ENCODE measurements at regions of chr17 and their contacts with region 1.

Region 1: GRCh38 chr17:39653662-39654331 is 11.4 kb upstream of the TCAP start:
- DNase-seq: peak; percentile 92
- H3K4me3 ChIP-seq: no peak overlapping the region; a peak in 1 of 4 replicates
- H3K27ac ChIP-seq: no peak overlapping the region
- H3K4me1 ChIP-seq: peaks cover 0 to 4% of the 10 kb centered on the region in 2 experiments; a peak in 1 of 4 replicates
- H3K27me3 ChIP-seq: no peaks in the 10 kb centered on the region
- CTCF ChIP-seq: peak; percentile 93
- EP300 ChIP-seq: no peak
- RAD21 ChIP-seq: peak; percentile 26; the same call in 1 of the 2 replicates

Region 2: DNA sequence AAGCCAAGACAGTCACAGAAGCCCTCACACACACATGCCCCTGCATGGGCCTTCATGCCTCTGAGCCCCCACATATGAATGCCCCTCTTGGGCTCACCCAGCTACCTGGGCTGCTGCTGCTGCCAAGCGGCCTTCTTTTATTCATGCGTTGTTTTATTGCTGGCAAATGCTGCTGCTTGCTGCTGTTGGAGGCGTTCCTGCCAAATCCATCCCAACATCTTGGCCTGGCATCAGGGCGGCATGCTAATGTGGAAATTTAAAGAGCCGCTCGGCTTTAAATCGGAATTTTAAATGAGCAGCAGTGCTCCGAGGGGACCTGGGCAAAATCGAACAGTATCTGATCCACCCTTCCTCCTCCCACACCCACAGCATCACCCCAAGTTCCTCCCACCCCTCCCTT is 85.1 kb before region 1 on chr17:
- CTCF ChIA-PET with region 1: no interaction called
- POLR2A ChIA-PET with region 1: no interaction called
- DNase-seq: no peak
- H3K4me3 ChIP-seq: no peak overlapping the region
- H3K27ac ChIP-seq: no peak overlapping the region
- H3K4me1 ChIP-seq: peaks cover 0 to 3% of the 10 kb centered on the region in 2 experiments; a peak in 1 of 4 replicates
- H3K27me3 ChIP-seq: no peaks in the 10 kb centered on the region
- CTCF ChIP-seq: no peak
- EP300 ChIP-seq: no peak
- RAD21 ChIP-seq: no peak

Region 3: GRCh38 chr17:39636927-39637736 is 16.7 kb before region 1 on chr17 and contains the start of gene STARD3:
- CTCF ChIA-PET with region 1: interaction called, 93 read pairs
- POLR2A ChIA-PET with region 1: no interaction called
- DNase-seq: peak; percentile 96
- H3K4me3 ChIP-seq: peak within 1 kb of the TSS; percentile 88 to 97
- H3K27ac ChIP-seq: peak within 1 kb of the TSS; percentile 59 to 85
- H3K4me1 ChIP-seq: peaks cover 0 to 21% of the 10 kb centered on the region in 2 experiments; a peak in 2 of 4 replicates
- H3K27me3 ChIP-seq: no peaks in the 10 kb centered on the region
- CTCF ChIP-seq: no peak
- EP300 ChIP-seq: no peak
- RAD21 ChIP-seq: no peak
- polyA plus RNA-seq, gene STARD3: 76.8 and 78.0 TPM in 2 replicates

Region 4: GRCh38 chr17:39668199-39668966 is 14.6 kb after region 1 on chr17 and contains the start of gene PNMT:
- CTCF ChIA-PET with region 1: interaction called, 149 read pairs
- POLR2A ChIA-PET with region 1: interaction called, 3 read pairs
- DNase-seq: peak; percentile 93
- H3K4me3 ChIP-seq: peak within 1 kb of the TSS; percentile 36 to 49
- H3K27ac ChIP-seq: no peak within 1 kb of the TSS
- H3K4me1 ChIP-seq: peaks cover 0 to 12% of the 10 kb centered on the region in 2 experiments; a peak in 1 of 4 replicates
- H3K27me3 ChIP-seq: no peaks in the 10 kb centered on the region
- CTCF ChIP-seq: peak; percentile 61
- EP300 ChIP-seq: no peak
- RAD21 ChIP-seq: peak; percentile 28; the same call in 1 of the 2 replicates
- polyA plus RNA-seq, gene PNMT: 0.05 and 0.07 TPM in 2 replicates